Ovary (tissue), 10 donors: ENCODE measurements at regions of chr1 and their contacts with region 1.

Region 1: DNA sequence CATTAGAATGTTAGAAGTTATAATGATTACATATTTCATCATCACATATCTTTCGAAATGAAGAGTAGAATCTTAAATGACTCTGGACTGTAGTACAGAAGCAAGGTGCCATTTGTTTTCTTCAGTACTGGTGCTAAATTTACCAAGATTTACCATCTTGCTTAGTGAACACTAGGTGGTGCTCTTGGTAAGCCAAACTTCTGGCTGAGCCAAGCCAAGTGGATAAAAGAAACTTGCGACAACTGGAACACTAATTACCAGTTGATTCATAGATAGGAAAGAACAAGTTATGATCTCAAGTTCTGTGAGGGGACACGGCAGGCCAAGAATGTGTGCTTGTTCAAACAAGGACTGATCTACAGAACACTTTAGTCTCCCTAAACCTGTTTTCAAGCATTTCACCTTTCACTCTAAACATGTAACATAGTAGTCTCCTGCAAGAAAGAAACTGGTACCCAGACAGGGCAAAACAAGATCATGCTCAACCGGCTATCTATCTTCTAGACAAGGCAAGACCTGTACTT is 19.8 kb downstream of the SPRTN start:
- DNase-seq: peak in 1 of 5 donors; percentile 36
- H3K4me3 ChIP-seq: no peak overlapping the region
- H3K27ac ChIP-seq: no peak overlapping the region
- H3K4me1 ChIP-seq: no peaks in the 10 kb centered on the region
- H3K27me3 ChIP-seq: no peaks in the 10 kb centered on the region
- CTCF ChIP-seq: peak; percentile 37 to 84 (median 83)
- EP300 ChIP-seq: no peak
- POLR2A ChIP-seq: no peak

Region 2: DNA sequence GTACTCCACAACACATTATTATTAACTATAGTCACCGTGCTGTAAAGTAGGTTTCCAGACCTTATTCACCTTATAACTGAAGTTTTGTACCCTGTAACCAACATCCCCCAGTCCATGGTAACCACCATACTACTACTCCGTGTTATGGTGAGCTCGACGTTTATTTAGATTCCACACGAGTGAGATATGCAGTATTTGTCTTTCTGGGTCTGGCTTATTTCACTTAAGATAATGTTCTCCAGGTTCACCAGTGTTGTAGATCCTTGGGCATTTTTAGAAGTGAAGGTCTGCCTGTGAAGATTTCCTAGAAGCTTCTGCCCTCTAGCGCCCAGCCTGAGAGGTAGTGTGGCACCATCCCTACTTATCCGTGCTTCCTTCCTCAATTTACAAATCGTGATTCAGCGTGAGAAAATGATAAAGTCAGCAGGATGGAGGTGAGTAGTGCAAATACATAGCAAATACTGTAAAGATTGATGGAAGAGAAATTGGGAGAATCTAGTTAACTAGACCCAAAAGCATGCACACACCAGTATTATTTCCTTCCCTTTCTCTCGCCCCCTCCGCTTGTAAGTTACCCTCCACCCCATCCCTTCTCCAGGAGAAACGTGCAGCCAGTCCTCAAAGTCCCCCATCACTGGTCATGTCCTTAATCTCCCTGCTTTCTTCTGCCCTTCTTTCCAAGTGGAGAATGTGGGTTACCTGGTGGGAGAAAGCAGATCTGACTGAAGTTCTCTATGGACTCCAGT is 232.7 kb after region 1 on chr1:
- intact Hi-C with region 1: loop called in 2 of 4 experiments (anchors 5 kb)
- DNase-seq: peak; percentile 21 to 61 (median 47)
- H3K4me3 ChIP-seq: no peak overlapping the region
- H3K27ac ChIP-seq: no peak overlapping the region
- H3K4me1 ChIP-seq: peaks cover 1% of the 10 kb centered on the region
- H3K27me3 ChIP-seq: no peaks in the 10 kb centered on the region
- CTCF ChIP-seq: peak; percentile 25 to 48 (median 26)
- EP300 ChIP-seq: no peak
- POLR2A ChIP-seq: no peak

Region 3: GRCh38 chr1:231603598-231604275 is 245.8 kb after region 1 on chr1:
- intact Hi-C with region 1: loop called in 3 of 4 experiments (anchors 5 to 10 kb)
- DNase-seq: peak in 2 of 5 donors; percentile 30 to 31
- H3K4me3 ChIP-seq: peak overlapping the region; percentile 28
- H3K27ac ChIP-seq: no peak overlapping the region
- H3K4me1 ChIP-seq: peaks cover 4% of the 10 kb centered on the region
- H3K27me3 ChIP-seq: no peaks in the 10 kb centered on the region
- CTCF ChIP-seq: peak; percentile 59 to 68 (median 64)
- EP300 ChIP-seq: no peak
- POLR2A ChIP-seq: no peak